PC-9 (cell line): ENCODE measurements at regions of chr15 and their contacts with region 1.

Region 1: DNA sequence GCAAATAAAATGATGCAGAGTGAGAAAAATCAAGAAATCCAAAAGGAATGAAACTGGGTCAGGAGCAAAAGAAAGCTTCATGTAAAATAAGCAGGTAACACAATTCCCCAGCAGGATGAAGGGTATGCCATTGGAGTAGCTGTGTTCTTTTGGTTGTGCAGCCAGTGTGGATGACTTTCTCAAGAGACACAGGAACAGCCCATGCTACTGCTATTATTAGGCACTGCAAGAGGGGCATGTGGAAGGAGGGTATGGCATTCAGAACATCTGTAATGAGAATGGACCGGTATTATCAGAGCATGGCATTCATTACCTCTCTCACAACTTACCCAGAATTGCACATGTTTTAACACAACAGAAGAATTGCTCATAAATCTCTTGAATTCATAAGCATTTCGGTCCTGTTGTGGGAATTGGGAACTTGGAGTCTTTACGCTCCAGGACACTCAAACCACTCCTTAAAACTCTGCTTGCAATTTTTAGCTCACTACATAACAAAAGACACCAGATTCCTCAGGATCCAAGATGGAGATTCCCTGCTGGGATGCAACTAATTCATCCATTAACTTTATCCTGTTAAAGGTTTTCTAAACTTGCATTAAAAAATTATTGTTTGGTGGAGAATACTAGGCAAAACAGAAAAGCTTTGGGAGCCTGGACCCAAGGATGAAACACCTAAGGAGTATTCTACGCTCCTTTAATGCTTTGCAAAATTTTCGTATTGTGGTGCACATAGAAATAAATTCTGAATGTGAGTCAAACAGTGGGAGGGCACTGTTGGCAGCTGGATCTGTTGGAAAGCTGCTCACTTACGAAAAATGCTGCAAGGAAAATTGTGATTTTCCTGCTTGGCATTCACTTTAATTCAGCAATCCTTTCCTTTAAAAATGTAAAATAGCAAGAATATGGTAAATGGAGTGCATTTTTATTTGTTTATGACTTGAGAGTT is 34.6 kb upstream of the CDIN1 start:
- DNase-seq: no peak
- H3K4me3 ChIP-seq: no peak overlapping the region
- H3K27ac ChIP-seq: no peak overlapping the region
- H3K4me1 ChIP-seq: no peaks in the 10 kb centered on the region
- H3K27me3 ChIP-seq: no peaks in the 10 kb centered on the region
- CTCF ChIP-seq: no peak

Region 2: GRCh38 chr15:36501063-36501678 is 43.6 kb before region 1 on chr15:
- CTCF ChIA-PET with region 1: no interaction called
- POLR2A ChIA-PET with region 1: no interaction called
- intact Hi-C with region 1: no loop called
- DNase-seq: peak in 1 of 2 experiments; percentile 27
- H3K4me3 ChIP-seq: no peak overlapping the region
- H3K27ac ChIP-seq: no peak overlapping the region
- H3K4me1 ChIP-seq: no peaks in the 10 kb centered on the region
- H3K27me3 ChIP-seq: no peaks in the 10 kb centered on the region
- CTCF ChIP-seq: peak; percentile 59

Region 3: GRCh38 chr15:36579792-36580431 is 35.1 kb after region 1 on chr15:
- CTCF ChIA-PET with region 1: no interaction called
- POLR2A ChIA-PET with region 1: interaction called, 15 read pairs
- intact Hi-C with region 1: no loop called
- DNase-seq: no peak
- H3K4me3 ChIP-seq: peak overlapping the region; percentile 77
- H3K27ac ChIP-seq: peak overlapping the region; percentile 88
- H3K4me1 ChIP-seq: peaks cover 32% of the 10 kb centered on the region
- H3K27me3 ChIP-seq: no peaks in the 10 kb centered on the region
- CTCF ChIP-seq: no peak

Region 4: GRCh38 chr15:36831125-36831903 is 286.5 kb after region 1 on chr15:
- CTCF ChIA-PET with region 1: no interaction called
- POLR2A ChIA-PET with region 1: no interaction called
- intact Hi-C with region 1: no loop called
- DNase-seq: peak; percentile 60 to 86
- H3K4me3 ChIP-seq: no peak overlapping the region
- H3K27ac ChIP-seq: peak overlapping the region; percentile 82
- H3K4me1 ChIP-seq: peaks cover 18% of the 10 kb centered on the region
- H3K27me3 ChIP-seq: no peaks in the 10 kb centered on the region
- CTCF ChIP-seq: no peak